ENCODE measurements at regions of chr5 and their contacts with region 1.

Region 1: GRCh38 chr5:82815871-82816270 is 261.3 kb downstream of the TMEM167A start:
- DNase-seq: no peak
- H3K4me3 ChIP-seq: no peak overlapping the region
- H3K27ac ChIP-seq: no peak overlapping the region
- H3K4me1 ChIP-seq: no peaks in the 10 kb centered on the region
- H3K27me3 ChIP-seq: no peaks in the 10 kb centered on the region
- CTCF ChIP-seq: no peak
- EP300 ChIP-seq: no peak
- POLR2A ChIP-seq: no peak

Region 2: DNA sequence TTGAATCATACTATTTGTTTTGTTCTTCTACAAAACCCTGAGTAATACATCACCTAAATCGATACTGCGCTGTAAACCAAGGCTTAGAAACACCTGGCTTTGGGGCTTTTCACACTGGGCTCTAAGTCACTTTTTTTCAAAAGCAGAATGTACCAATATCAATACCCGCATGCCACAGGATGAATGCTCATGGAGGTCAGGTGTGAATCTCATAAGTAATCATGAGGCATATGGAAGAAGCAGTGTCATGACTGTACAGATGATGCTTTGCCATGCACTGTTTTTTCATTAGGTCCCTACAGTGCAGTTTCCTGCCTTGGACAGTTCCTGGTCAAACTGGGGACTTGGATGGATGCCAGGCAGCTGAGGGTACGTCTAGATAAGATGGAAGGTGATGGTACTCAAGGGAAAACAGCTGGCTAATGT is 893.0 kb before region 1 on chr5:
- in situ Hi-C with region 1: no loop called
- intact Hi-C with region 1: loop called (anchors 5 kb)
- DNase-seq: no peak
- H3K4me3 ChIP-seq: no peak overlapping the region
- H3K27ac ChIP-seq: no peak overlapping the region
- H3K4me1 ChIP-seq: no peaks in the 10 kb centered on the region
- H3K27me3 ChIP-seq: no peaks in the 10 kb centered on the region
- CTCF ChIP-seq: no peak
- EP300 ChIP-seq: no peak
- POLR2A ChIP-seq: no peak